Endothelial cell of umbilical vein (primary cell): ENCODE measurements at regions of chr3 and their contacts with region 1.

Region 1: GRCh38 chr3:116770815-116771450 is 61.4 kb downstream of the TUSC7 start:
- DNase-seq: peak; percentile 82
- H3K4me3 ChIP-seq: no peak overlapping the region
- H3K27ac ChIP-seq: no peak overlapping the region
- H3K4me1 ChIP-seq: no peaks in the 10 kb centered on the region
- H3K27me3 ChIP-seq: no peaks in the 10 kb centered on the region
- CTCF ChIP-seq: peak; percentile 86 to 98
- POLR2A ChIP-seq: no peak

Region 2: GRCh38 chr3:116288485-116288884 is 482.4 kb before region 1 on chr3:
- CTCF ChIA-PET with region 1: no interaction called
- POLR2A ChIA-PET with region 1: no interaction called
- dilution Hi-C with region 1: no loop called
- intact Hi-C with region 1: no loop called
- DNase-seq: no peak
- H3K4me3 ChIP-seq: no peak overlapping the region
- H3K27ac ChIP-seq: no peak overlapping the region
- H3K4me1 ChIP-seq: no peaks in the 10 kb centered on the region
- H3K27me3 ChIP-seq: no peaks in the 10 kb centered on the region
- CTCF ChIP-seq: no peak
- POLR2A ChIP-seq: no peak

Region 3: GRCh38 chr3:116663161-116664110 is 107.5 kb before region 1 on chr3:
- CTCF ChIA-PET with region 1: no interaction called
- POLR2A ChIA-PET with region 1: no interaction called
- dilution Hi-C with region 1: no loop called
- intact Hi-C with region 1: no loop called
- DNase-seq: no peak
- H3K4me3 ChIP-seq: no peak overlapping the region
- H3K27ac ChIP-seq: no peak overlapping the region
- H3K4me1 ChIP-seq: no peaks in the 10 kb centered on the region
- H3K27me3 ChIP-seq: no peaks in the 10 kb centered on the region
- CTCF ChIP-seq: no peak
- POLR2A ChIP-seq: no peak

Region 4: DNA sequence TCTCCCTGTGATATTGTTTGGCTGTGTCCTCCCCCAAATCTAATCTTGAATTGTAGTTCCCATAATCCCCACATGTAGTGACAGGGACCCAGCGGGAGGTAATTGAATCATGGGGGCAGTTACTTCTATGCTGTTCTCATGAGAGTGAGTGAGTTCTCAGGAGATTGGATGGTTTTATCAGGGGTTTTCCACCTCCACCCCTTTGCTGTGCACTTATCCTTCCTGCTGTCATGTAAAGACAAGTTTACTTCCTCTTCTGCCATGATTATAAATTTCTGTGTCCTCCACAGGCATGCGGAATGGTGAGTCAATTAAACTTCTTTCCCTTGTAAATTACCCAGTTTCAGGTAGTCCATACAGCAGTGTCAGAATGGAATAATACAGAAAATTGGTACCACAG is 36.7 kb before region 1 on chr3:
- CTCF ChIA-PET with region 1: no interaction called
- POLR2A ChIA-PET with region 1: no interaction called
- dilution Hi-C with region 1: no loop called
- intact Hi-C with region 1: no loop called
- DNase-seq: no peak
- H3K4me3 ChIP-seq: no peak overlapping the region
- H3K27ac ChIP-seq: no peak overlapping the region
- H3K4me1 ChIP-seq: no peaks in the 10 kb centered on the region
- H3K27me3 ChIP-seq: no peaks in the 10 kb centered on the region
- CTCF ChIP-seq: no peak
- POLR2A ChIP-seq: no peak

Region 5: GRCh38 chr3:116757315-116757714 is 13.6 kb before region 1 on chr3:
- CTCF ChIA-PET with region 1: interaction called, 20 read pairs
- POLR2A ChIA-PET with region 1: no interaction called
- dilution Hi-C with region 1: no loop called
- intact Hi-C with region 1: no loop called
- DNase-seq: no peak
- H3K4me3 ChIP-seq: no peak overlapping the region
- H3K27ac ChIP-seq: no peak overlapping the region
- H3K4me1 ChIP-seq: no peaks in the 10 kb centered on the region
- H3K27me3 ChIP-seq: no peaks in the 10 kb centered on the region
- CTCF ChIP-seq: no peak
- POLR2A ChIP-seq: no peak

Region 6: DNA sequence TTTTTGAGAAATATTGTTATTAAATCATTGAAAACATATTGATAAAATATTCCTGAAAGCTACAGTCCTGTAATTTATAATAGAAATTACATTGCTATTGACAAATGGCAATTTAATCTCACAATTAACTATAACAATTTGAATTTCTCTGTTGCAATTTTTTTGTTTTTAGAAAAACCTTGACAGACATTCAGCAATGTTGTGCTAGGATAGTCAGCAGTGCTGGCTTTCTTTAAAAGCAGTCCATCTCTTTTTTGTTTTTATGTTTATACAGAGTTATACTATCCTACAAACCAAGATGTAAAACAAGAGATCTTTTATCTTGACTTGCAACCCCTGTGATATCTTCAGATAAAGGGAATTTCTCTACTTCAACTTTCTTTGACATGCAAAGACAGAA is 31.7 kb after region 1 on chr3:
- CTCF ChIA-PET with region 1: interaction called, 11 read pairs
- POLR2A ChIA-PET with region 1: no interaction called
- dilution Hi-C with region 1: no loop called
- intact Hi-C with region 1: no loop called
- DNase-seq: no peak
- H3K4me3 ChIP-seq: no peak overlapping the region
- H3K27ac ChIP-seq: no peak overlapping the region
- H3K4me1 ChIP-seq: no peaks in the 10 kb centered on the region
- H3K27me3 ChIP-seq: no peaks in the 10 kb centered on the region
- CTCF ChIP-seq: no peak
- POLR2A ChIP-seq: no peak

Region 7: DNA sequence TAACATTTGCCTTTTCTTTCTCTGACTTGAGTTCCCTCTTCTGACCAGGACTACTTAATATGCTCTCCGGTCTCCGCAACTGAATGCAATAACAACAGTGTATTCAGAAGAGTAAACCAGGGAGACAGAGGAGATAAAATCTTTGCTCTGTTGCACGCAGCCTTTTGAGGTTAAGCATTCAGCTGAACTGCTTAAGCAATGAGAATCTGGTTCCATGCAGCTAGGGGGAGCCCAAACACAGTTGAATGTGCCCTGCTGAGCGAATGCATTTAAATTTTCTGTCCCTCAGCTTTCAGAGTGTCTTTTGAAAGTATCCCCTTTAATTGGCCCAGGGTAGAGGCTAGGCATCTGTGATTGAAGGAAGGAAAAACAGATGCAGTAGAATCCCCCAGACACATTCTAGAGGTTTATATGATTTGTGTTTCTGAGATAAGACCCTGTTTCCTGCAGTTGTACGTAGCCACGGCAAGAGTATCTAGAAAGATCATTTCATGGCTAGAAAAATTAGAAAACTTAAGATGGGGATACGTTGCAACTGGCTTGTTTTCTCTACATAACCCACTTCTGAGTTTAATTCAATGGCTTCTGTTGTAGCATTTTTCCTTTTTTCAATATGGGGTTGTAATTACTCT is 248.3 kb after region 1 on chr3:
- CTCF ChIA-PET with region 1: interaction called, 20 read pairs
- POLR2A ChIA-PET with region 1: no interaction called
- dilution Hi-C with region 1: no loop called
- intact Hi-C with region 1: loop called (anchors 2 kb)
- DNase-seq: peak; percentile 67
- H3K4me3 ChIP-seq: no peak overlapping the region
- H3K27ac ChIP-seq: no peak overlapping the region
- H3K4me1 ChIP-seq: no peaks in the 10 kb centered on the region
- H3K27me3 ChIP-seq: peaks cover 4 to 9% of the 10 kb centered on the region in 2 experiments
- CTCF ChIP-seq: peak; percentile 73 to 78
- POLR2A ChIP-seq: no peak

Region 8: DNA sequence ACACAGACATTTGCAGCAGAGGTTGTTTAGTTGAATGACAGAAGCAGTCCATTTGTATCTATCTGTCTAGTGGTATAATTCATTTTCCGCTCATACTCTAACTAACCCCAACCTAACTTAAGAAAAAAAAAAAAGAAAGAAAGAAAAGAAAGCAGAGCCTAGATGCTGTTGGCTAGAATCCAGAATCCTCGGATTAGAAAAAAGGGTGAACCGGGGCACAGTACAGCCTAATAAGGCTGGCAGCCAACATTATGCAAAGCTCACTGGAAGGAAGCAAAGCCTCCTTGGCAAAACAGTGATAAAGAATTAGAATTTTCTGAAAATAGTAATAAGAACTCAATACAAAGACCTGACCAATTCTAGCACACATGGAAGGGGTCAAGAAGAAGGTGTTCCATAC is 579.4 kb after region 1 on chr3:
- CTCF ChIA-PET with region 1: interaction called, 10 read pairs
- POLR2A ChIA-PET with region 1: no interaction called
- dilution Hi-C with region 1: no loop called
- intact Hi-C with region 1: loop called (anchors 1 kb)
- DNase-seq: peak; percentile 96
- H3K4me3 ChIP-seq: no peak overlapping the region
- H3K27ac ChIP-seq: no peak overlapping the region
- H3K4me1 ChIP-seq: peaks cover 4% of the 10 kb centered on the region
- H3K27me3 ChIP-seq: no peaks in the 10 kb centered on the region
- CTCF ChIP-seq: no peak
- POLR2A ChIP-seq: no peak

Region 9: DNA sequence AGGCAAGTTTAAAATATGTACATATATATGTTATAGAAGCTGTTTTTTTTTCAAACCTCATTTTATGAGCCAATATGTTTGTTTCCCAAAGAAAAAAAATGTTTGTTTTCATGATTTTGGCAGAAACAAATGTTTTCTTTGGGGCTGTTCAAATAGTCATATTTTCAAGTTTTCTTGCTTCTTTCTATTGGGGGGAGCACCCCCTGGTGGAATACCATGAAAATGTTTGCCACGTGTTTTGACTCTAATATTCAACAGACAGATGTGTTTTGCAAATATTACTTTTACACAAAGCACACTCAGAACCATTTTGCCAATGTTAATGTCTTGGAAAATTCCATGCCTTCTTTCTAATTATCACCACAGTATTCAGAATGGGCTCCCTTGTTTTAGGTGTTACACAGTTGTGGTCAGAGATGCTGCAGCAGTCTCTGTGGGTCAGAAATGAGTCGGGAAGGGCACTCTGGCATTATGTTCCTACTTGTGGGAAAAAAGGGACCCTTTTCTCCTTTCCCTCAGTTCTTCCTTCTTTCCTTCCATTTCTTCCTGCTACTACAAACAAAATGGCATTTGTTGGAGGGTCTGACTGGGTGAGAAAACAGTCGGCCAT is 755.6 kb after region 1 on chr3:
- CTCF ChIA-PET with region 1: interaction called, 91 read pairs
- POLR2A ChIA-PET with region 1: no interaction called
- dilution Hi-C with region 1: no loop called
- intact Hi-C with region 1: loop called (anchors 1 kb)
- DNase-seq: peak; percentile 40
- H3K4me3 ChIP-seq: no peak overlapping the region
- H3K27ac ChIP-seq: no peak overlapping the region
- H3K4me1 ChIP-seq: no peaks in the 10 kb centered on the region
- H3K27me3 ChIP-seq: peaks cover 0 to 3% of the 10 kb centered on the region in 2 experiments
- CTCF ChIP-seq: peak; percentile 42 to 53
- POLR2A ChIP-seq: no peak

Region 10: DNA sequence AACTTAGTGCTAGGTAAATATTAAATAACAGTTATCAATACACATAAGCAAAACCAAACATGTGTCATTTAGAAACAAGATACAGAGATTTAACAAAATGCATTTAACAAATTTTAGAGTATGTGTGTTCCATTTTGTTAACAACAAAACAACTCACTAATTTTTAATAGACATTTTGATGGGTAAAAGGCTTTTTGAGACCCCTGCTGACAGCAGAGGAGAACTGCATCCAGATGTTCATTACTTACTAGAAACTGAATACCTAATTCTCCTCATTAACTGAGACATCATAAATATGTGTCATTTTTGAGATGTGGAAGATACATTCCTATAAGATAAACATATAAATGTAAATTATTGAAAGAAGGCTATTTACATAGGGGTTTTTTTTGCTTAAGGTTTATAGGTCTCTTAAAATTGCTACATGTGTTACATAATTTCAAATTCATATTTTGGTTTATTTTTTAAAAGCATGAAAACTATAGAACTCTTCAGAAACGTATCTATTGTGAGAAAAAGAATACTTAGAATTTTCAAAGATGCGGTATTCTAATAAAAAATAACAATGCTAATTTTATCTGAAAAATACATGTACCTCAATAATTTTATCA is 948.5 kb after region 1 on chr3:
- CTCF ChIA-PET with region 1: interaction called, 33 read pairs
- POLR2A ChIA-PET with region 1: no interaction called
- dilution Hi-C with region 1: no loop called
- intact Hi-C with region 1: loop called (anchors 1 kb)
- DNase-seq: peak; percentile 45
- H3K4me3 ChIP-seq: no peak overlapping the region
- H3K27ac ChIP-seq: no peak overlapping the region
- H3K4me1 ChIP-seq: no peaks in the 10 kb centered on the region
- H3K27me3 ChIP-seq: peaks cover 0 to 3% of the 10 kb centered on the region in 2 experiments
- CTCF ChIP-seq: peak; percentile 52 to 63
- POLR2A ChIP-seq: no peak